ENCODE measurements at regions of chr19 and their contacts with region 1.

Region 1: DNA sequence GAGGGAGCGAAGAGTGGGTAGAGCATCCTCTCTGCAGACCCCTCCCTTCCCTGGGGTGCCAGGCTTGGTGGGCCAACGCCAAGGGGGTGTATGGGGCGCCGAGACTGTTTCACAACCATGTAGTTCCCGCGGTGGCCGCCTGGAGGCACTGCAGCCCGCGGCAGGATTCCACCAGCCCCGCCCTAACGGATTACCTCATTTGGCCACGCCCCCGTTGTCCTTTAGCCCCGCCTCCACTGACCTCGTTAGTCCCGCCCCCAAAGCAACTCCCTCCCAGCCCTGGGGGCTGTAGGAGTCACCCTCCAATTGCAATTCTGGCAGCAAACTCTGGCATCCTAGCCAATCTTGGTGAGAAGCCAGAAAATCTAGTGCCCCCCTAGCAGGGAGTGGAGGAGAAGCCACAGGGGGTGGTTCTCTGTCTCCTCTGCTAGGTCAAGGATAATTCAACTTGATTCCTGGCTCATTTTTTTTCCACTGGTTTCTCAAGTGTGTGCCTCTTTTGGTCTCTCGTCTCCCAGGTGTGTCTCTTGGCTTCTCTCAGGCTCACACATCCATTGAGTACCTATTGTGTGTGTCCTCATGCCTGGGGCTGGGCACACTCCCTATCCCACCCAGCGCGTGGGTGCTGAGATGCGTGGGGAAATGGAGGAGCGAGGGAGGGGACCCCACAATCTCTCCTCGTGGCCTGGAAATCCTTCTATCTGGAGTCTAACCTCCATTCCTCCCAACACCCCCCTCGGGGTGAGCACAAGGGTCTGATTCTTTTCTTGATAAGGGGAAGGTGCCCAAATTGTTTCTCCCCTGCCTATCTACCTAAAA is 2.0 kb downstream of the OLFM2 start:
- DNase-seq: peak; percentile 84
- ATAC-seq: peak; percentile 82
- H3K4me3 ChIP-seq: no peak overlapping the region
- H3K4me3 Mint-ChIP-seq: no peak overlapping the region
- H3K27ac ChIP-seq: no peak overlapping the region
- H3K27ac Mint-ChIP-seq: no peak overlapping the region
- H3K4me1 ChIP-seq: peaks cover 22 to 30% of the 10 kb centered on the region in 2 donors
- H3K4me1 Mint-ChIP-seq: peaks cover 26% of the 10 kb centered on the region
- H3K27me3 ChIP-seq: peaks cover 0 to 60% (median 34%) of the 10 kb centered on the region in 4 experiments
- H3K27me3 Mint-ChIP-seq: peaks cover 51% of the 10 kb centered on the region
- CTCF ChIP-seq: peak; percentile 89

Region 2: DNA sequence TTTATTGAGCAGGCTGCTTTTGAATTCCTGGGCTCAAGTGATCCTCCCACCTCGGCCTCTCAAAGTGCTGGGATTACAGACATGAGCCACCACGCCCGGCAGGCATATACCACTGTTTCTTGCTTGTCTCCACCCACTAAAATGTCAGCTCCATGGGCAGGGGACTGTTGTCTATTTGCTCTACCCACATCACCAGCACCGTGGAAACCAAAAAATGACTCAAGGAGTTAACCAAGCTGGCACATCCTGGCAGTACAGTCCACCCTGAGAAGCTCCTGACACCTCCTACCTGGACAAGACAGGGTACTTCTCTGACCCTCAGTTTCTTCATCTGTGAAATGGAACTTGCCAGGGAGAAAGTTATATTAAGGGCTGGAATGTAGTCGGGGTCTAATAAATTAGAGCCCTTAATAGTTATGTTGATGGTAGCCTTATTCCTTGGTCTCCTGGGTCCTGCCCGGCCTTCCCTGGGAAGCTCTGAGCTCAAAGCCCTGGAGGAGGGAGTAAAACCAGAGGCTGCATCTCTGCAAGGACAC is 92.9 kb after region 1 on chr19:
- CTCF ChIA-PET with region 1: interaction called, 38 read pairs
- POLR2A ChIA-PET with region 1: no interaction called
- intact Hi-C with region 1: loop called (anchors 2 kb)
- DNase-seq: no peak
- ATAC-seq: no peak
- H3K4me3 ChIP-seq: no peak overlapping the region
- H3K4me3 Mint-ChIP-seq: no peak overlapping the region
- H3K27ac ChIP-seq: no peak overlapping the region
- H3K27ac Mint-ChIP-seq: no peak overlapping the region
- H3K4me1 ChIP-seq: peaks cover 6 to 8% of the 10 kb centered on the region in 2 donors
- H3K4me1 Mint-ChIP-seq: peaks cover 3% of the 10 kb centered on the region
- H3K27me3 ChIP-seq: peaks cover 0 to 29% (median 11%) of the 10 kb centered on the region in 4 experiments
- H3K27me3 Mint-ChIP-seq: peaks cover 18% of the 10 kb centered on the region
- CTCF ChIP-seq: no peak